ENCODE measurements at regions of chr4 and their contacts with region 1.

Region 1: DNA sequence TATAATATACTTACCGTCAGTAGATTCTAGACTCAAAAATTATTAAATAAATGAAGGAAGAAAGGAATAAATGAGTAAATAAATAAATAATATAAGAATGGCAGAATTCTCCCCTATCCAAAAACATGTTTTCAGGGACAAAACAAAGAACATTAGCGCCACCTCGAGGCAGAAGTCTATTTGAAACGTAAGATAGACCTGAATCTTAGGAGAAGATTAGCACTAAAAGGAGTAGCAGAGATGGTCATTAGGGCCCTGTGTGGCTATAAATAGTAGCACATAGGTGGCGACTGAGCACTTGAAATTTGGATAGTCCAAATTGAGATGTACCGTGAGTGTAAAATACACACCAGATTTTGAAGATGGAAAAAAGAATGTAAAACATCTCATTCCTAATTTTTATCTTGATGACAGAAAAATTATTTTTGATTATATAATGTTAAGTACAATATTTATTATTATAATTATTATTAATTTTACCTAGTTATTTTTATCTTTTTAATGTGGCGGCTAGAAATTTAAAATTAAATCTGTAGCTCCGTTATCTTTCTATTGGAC is 24.3 kb upstream of the SRD5A3 start:
- DNase-seq: peak; percentile 82 to 90 (median 86)
- H3K4me3 ChIP-seq: no peak overlapping the region
- H3K27ac ChIP-seq: no peak overlapping the region
- H3K4me1 ChIP-seq: peaks cover 0 to 9% (median 5%) of the 10 kb centered on the region in 4 experiments
- H3K27me3 ChIP-seq: peaks cover 0 to 9% (median 2%) of the 10 kb centered on the region in 5 experiments

Region 2: GRCh38 chr4:54971474-54971950 is 350.3 kb before region 1 on chr4:
- CTCF ChIA-PET with region 1: interaction called, 56 read pairs
- POLR2A ChIA-PET with region 1: no interaction called
- DNase-seq: peak; percentile 67 to 83 (median 81)
- H3K4me3 ChIP-seq: peak overlapping the region in 1 of 7 experiments; percentile 34
- H3K27ac ChIP-seq: no peak overlapping the region
- H3K4me1 ChIP-seq: no peaks in the 10 kb centered on the region
- H3K27me3 ChIP-seq: no peaks in the 10 kb centered on the region

Region 3: GRCh38 chr4:55078987-55079386 is 242.8 kb before region 1 on chr4:
- CTCF ChIA-PET with region 1: no interaction called
- POLR2A ChIA-PET with region 1: no interaction called
- DNase-seq: no peak
- H3K4me3 ChIP-seq: no peak overlapping the region
- H3K27ac ChIP-seq: no peak overlapping the region
- H3K4me1 ChIP-seq: peaks cover 0 to 2% (median 0%) of the 10 kb centered on the region in 4 experiments
- H3K27me3 ChIP-seq: peaks cover 0 to 10% (median 3%) of the 10 kb centered on the region in 5 experiments

Region 4: GRCh38 chr4:55184600-55185523 is 136.9 kb before region 1 on chr4:
- CTCF ChIA-PET with region 1: interaction called, 11 read pairs
- POLR2A ChIA-PET with region 1: no interaction called
- DNase-seq: peak; percentile 23 to 40 (median 40)
- H3K4me3 ChIP-seq: no peak overlapping the region
- H3K27ac ChIP-seq: no peak overlapping the region
- H3K4me1 ChIP-seq: no peaks in the 10 kb centered on the region
- H3K27me3 ChIP-seq: peaks cover 0 to 7% (median 4%) of the 10 kb centered on the region in 5 experiments

Measured in common myeloid progenitor, CD34-positive (primary cell).